ENCODE measurements at regions of chr13 and their contacts with region 1.

Region 1: GRCh38 chr13:30792285-30793000 is 57.1 kb downstream of the ALOX5AP start:
- DNase-seq: peak; percentile 61
- ATAC-seq: peak; percentile 98
- H3K4me3 ChIP-seq: peak overlapping the region in 1 of 3 experiments; percentile 30; a peak in 2 of 6 replicates
- H3K27ac ChIP-seq: no peak overlapping the region
- H3K4me1 ChIP-seq: peaks cover 31% of the 10 kb centered on the region
- H3K27me3 ChIP-seq: no peaks in the 10 kb centered on the region
- CTCF ChIP-seq: peak; percentile 36
- EP300 ChIP-seq: no peak
- POLR2A ChIP-seq: no peak
- RAD21 ChIP-seq: no peak

Region 2: DNA sequence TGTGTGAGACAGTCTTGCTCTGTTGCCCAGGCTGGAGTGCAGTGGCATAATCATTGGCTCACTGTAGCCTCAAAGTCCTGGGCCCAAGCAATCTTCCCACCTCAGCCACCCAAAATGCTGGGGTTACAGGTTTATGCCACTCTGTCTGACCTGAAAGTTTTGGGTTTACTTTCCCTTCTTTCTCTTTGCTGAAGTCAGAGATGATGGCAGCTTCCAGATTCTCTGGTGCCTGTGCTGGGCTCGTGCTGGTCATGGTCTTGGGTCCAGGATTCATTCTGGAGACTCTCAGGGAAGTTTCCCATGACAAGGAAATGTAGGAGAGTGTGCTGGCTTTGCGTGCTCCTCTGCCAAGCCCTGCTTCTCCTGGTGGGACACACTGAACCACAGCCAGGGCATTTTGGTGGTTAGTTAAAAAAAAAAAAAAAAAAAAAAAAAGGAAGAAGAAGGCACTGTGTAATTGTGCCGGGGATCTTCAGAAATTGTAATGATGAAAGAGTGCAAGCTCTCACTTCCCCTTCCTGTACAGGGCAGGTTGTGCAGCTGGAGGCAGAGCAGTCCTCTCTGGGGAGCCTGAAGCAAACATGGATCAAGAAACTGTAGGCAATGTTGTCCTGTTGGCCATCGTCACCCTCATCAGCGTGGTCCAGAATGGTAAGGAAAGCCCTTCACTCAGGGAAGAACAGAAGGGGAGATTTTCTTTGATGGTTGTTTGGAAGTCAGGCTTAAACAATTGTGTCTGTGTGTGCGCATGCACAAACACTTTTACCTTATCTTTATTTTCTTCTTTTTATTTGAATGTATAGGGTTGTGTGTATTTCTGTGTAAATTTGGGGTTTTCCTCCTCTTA is 57.2 kb before region 1 on chr13 and contains the start of gene ALOX5AP:
- CTCF ChIA-PET with region 1: no interaction called
- POLR2A ChIA-PET with region 1: no interaction called
- in situ Hi-C with region 1: no loop called
- intact Hi-C with region 1: no loop called
- DNase-seq: no peak
- ATAC-seq: no peak
- H3K4me3 ChIP-seq: no peak within 1 kb of the TSS
- H3K27ac ChIP-seq: no peak within 1 kb of the TSS
- H3K4me1 ChIP-seq: peaks cover 28% of the 10 kb centered on the region
- H3K27me3 ChIP-seq: peaks cover 2 to 7% of the 10 kb centered on the region in 2 experiments; a peak in 2 of 5 replicates
- CTCF ChIP-seq: no peak
- EP300 ChIP-seq: no peak
- POLR2A ChIP-seq: no peak
- RAD21 ChIP-seq: no peak
- total RNA-seq, gene ALOX5AP: 0.70 and 0.97 TPM in 2 replicates

Region 3: DNA sequence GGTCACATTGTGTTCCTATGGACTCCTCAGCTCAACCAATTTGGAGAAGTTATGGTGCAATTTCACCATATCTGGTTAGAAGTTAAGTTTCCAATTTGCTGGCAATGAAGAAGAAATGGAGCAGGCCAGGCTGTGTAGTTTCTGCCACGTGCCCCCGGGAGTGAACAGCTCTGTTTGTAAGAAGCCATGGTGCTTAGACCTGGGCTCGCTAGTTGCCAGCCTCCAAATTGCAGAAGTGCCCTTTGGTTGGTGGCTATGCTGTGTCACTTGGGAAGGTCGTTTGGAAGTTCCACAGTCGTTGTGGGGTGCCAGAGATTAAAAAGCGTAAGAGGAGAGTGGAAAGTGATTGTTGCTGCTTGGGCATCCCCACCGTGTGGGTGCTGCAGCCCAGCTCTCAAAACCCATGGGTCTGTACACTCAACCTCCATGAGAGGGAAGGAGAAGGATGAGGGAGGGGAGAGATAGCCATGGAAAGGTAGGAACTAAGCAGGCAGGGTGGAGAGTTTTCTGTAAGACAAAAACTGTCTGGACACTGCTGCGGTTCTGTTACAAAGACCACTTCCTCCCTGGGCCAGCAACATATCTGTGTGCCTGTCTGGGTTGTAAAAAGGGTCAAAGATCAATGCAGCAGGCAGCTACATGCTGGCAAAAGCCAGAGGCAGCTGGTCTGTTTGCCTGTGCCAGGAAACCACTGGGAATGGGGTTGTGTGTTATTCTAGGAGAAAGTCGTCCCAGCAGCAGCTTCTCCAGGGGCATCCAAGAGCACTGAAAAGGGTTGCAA is 46.3 kb before region 1 on chr13:
- CTCF ChIA-PET with region 1: no interaction called
- POLR2A ChIA-PET with region 1: no interaction called
- in situ Hi-C with region 1: no loop called
- intact Hi-C with region 1: loop called (anchors 1 kb)
- DNase-seq: peak; percentile 65
- ATAC-seq: peak; percentile 87
- H3K4me3 ChIP-seq: peak overlapping the region in 2 of 3 experiments; percentile 8 to 51; a peak in 4 of 6 replicates
- H3K27ac ChIP-seq: no peak overlapping the region
- H3K4me1 ChIP-seq: peaks cover 47% of the 10 kb centered on the region
- H3K27me3 ChIP-seq: no peaks in the 10 kb centered on the region
- CTCF ChIP-seq: no peak
- EP300 ChIP-seq: no peak
- POLR2A ChIP-seq: no peak
- RAD21 ChIP-seq: no peak

Measured in HepG2 (cell line).